WTC11 (cell line): ENCODE measurements at regions of chr16 and their contacts with region 1.

Region 1: GRCh38 chr16:982145-983043 is 824 bp downstream of the SOX8 start:
- DNase-seq: peak; percentile 42
- ATAC-seq: no peak
- H3K4me3 Mint-ChIP-seq: peak overlapping the region; percentile 69
- H3K27ac Mint-ChIP-seq: no peak overlapping the region
- H3K4me1 Mint-ChIP-seq: peaks cover 5% of the 10 kb centered on the region
- H3K27me3 Mint-ChIP-seq: peaks cover 29% of the 10 kb centered on the region
- CTCF ChIP-seq: no peak

Region 2: DNA sequence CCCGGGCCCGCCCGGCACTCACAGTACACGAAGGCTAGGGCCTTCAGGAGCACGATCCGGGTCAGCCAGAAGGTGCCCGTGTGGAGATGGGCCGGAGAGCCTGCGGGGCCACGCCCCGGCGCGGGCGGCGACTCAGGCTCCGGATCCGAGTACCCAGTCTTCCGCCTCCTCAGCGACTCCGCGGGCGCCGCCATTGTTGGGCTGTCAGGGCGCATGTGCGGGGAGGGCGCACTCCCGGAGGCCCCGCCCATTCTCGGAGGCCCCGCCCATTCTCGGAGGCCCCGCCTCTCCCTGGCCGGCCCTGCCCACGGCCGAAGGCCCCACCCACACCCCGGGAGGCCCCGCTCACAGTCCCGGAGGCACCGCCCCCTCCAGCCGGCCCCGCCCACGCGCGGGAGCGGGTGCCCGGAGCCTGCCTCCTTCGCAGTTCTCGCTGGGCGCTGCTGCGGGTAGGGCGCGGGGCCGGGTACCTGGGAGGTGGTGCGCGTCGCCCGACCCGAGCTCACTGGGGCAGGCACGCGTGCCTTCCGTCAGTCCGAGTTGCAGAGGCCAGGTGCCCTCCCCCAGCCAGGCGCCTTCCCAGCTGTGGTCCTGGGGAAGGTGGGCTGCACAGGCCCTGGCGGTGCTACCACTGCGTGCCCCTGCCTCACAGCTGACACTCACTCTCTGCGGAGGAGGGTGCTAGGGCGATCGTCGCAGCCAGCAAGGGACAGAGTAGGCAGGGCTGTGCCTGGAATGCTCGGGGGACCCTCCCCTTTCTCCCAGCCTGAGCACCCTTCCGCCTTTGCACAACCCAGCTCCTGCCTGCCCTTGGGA is 11.4 kb before region 1 on chr16 and contains the start of gene LMF1:
- CTCF ChIA-PET with region 1: interaction called, 18 read pairs
- POLR2A ChIA-PET with region 1: interaction called, 9 read pairs
- DNase-seq: peak; percentile 94
- ATAC-seq: peak; percentile 89
- H3K4me3 Mint-ChIP-seq: peak within 1 kb of the TSS; percentile 68
- H3K27ac Mint-ChIP-seq: no peak within 1 kb of the TSS
- H3K4me1 Mint-ChIP-seq: peaks cover 12% of the 10 kb centered on the region
- H3K27me3 Mint-ChIP-seq: peaks cover 16% of the 10 kb centered on the region
- CTCF ChIP-seq: no peak
- total RNA-seq, gene LMF1: 10.5 to 13.0 TPM (median 10.8 TPM) in 3 replicates

Region 3: GRCh38 chr16:1005286-1005685 is 22.9 kb after region 1 on chr16:
- CTCF ChIA-PET with region 1: no interaction called
- POLR2A ChIA-PET with region 1: no interaction called
- DNase-seq: no peak
- ATAC-seq: no peak
- H3K4me3 Mint-ChIP-seq: no peak overlapping the region
- H3K27ac Mint-ChIP-seq: no peak overlapping the region; the same call in 1 of the 2 replicates
- H3K4me1 Mint-ChIP-seq: no peaks in the 10 kb centered on the region
- H3K27me3 Mint-ChIP-seq: no peaks in the 10 kb centered on the region
- CTCF ChIP-seq: no peak

Region 4: GRCh38 chr16:1066584-1067172 is 84.3 kb after region 1 on chr16:
- CTCF ChIA-PET with region 1: no interaction called
- POLR2A ChIA-PET with region 1: no interaction called
- DNase-seq: no peak
- ATAC-seq: no peak
- H3K4me3 Mint-ChIP-seq: no peak overlapping the region
- H3K27ac Mint-ChIP-seq: no peak overlapping the region
- H3K4me1 Mint-ChIP-seq: peaks cover 3% of the 10 kb centered on the region
- H3K27me3 Mint-ChIP-seq: no peaks in the 10 kb centered on the region
- CTCF ChIP-seq: no peak